ENCODE measurements at regions of chr3 and their contacts with region 1.

Region 1: DNA sequence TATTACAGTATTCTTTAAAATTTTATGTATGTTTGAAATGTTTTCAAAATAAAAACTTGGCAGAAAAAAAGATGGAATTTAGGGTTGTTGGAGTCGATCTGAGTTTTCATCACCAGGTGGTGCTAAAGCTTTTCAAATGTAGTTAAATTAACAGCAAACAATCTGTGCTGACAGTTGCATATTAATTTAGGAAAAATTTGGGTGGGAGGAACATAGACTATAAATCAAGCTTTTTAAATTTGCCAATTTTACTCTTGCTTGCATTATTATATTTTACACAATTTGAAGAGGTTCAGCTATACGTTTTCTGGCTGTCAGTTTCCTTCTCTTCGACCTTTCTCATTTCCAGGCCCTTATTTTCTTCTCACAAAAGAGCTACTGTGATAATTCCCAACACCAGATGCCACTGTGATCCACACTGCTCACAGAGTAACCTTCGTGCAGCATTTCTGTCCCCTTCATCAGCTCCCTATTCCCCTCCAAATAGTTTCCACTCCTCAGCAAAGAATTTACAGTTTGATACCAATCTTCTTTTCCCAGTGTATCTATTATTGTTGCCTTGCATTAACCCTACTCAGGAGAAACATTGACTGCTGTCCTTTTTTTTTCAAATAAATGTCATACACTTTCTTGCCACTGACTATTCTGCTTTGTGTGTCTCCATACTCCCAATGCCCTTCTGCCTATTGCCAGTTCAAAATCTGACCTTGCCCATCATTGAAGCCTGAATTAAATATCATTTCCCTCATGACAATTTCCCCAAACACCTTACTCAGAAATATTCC is 53.4 kb upstream of the EIF5A2 start:
- DNase-seq: no peak
- ATAC-seq: peak; percentile 72 to 88 (median 80)
- H3K4me3 ChIP-seq: no peak overlapping the region
- H3K27ac ChIP-seq: peak overlapping the region in 2 of 3 donors; percentile 27 to 46
- H3K4me1 ChIP-seq: peaks cover 0 to 38% (median 14%) of the 10 kb centered on the region in 4 donors
- H3K27me3 ChIP-seq: no peaks in the 10 kb centered on the region
- CTCF ChIP-seq: peak; percentile 58 to 72 (median 64)
- POLR2A ChIP-seq: no peak

Region 2: DNA sequence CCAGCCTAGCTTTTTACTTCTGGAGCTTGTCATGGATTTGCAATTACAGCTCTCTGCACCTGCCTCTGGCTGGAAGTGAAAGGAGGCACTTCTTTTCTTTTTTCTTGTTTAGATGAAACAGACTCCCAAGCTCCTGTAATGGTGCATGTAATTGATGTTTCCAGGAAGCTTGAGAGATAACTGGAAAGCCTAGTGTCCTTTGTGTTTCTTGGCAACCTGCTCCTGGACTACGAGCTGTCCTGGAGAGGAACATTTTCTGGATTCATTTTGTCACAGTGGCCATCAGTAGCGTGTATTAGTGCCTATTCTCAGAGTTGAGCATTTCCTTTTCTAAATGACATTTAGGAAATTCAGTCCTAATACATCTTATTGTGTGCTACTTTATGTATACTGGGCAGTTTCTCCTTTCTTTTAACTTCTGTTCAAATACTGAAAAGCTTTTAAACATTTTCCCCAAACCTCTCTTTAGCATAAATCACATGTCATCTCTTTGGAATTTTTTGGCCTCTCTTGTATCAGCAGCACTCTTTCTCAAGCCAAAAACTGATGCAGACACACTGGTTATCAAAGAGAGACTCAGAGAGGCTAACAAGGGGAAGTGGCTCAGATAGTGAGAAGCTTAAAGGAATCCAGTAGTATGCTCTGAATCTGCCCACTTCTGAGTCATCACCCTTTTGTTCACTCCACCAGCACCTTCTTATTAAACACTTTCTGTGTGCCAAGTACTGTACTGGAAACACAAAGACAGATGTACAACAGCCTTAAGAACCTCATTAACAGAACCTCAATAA is 127.4 kb after region 1 on chr3:
- intact Hi-C with region 1: no loop called
- DNase-seq: peak in 1 of 3 donors; percentile 52
- ATAC-seq: peak; percentile 71 to 76 (median 72)
- H3K4me3 ChIP-seq: no peak overlapping the region
- H3K27ac ChIP-seq: peak overlapping the region; percentile 49 to 58 (median 50)
- H3K4me1 ChIP-seq: peaks cover 0 to 49% (median 27%) of the 10 kb centered on the region in 4 donors
- H3K27me3 ChIP-seq: no peaks in the 10 kb centered on the region
- CTCF ChIP-seq: no peak
- POLR2A ChIP-seq: no peak

Region 3: GRCh38 chr3:171172070-171172469 is 210.3 kb after region 1 on chr3:
- intact Hi-C with region 1: loop called in 1 of 2 experiments (anchors 10 kb)
- DNase-seq: no peak
- ATAC-seq: no peak
- H3K4me3 ChIP-seq: no peak overlapping the region
- H3K27ac ChIP-seq: no peak overlapping the region
- H3K4me1 ChIP-seq: peaks cover 0 to 21% (median 7%) of the 10 kb centered on the region in 4 donors
- H3K27me3 ChIP-seq: no peaks in the 10 kb centered on the region
- CTCF ChIP-seq: peak in 2 of 4 donors; percentile 17 to 32
- POLR2A ChIP-seq: no peak